Activated B cell treated with CpG ODN at 0.5 μM for 24 hours (primary cell): ENCODE measurements at regions of chr9 and their contacts with region 1.

Region 1: GRCh38 chr9:27400334-27400880 is 103.5 kb upstream of the EQTN start:
- DNase-seq: no peak
- ATAC-seq: no peak
- H3K4me3 Mint-ChIP-seq: no peak overlapping the region
- H3K27ac Mint-ChIP-seq: no peak overlapping the region
- H3K4me1 Mint-ChIP-seq: peaks cover 55% of the 10 kb centered on the region
- H3K27me3 Mint-ChIP-seq: no peaks in the 10 kb centered on the region
- CTCF ChIP-seq: no peak

Region 2: GRCh38 chr9:27385606-27386322 is 14.6 kb before region 1 on chr9:
- CTCF ChIA-PET with region 1: no interaction called
- POLR2A ChIA-PET with region 1: no interaction called
- intact Hi-C with region 1: loop called (anchors 1 kb)
- DNase-seq: no peak
- ATAC-seq: no peak
- H3K4me3 Mint-ChIP-seq: peak overlapping the region; percentile 19
- H3K27ac Mint-ChIP-seq: no peak overlapping the region
- H3K4me1 Mint-ChIP-seq: peaks cover 86% of the 10 kb centered on the region
- H3K27me3 Mint-ChIP-seq: no peaks in the 10 kb centered on the region
- CTCF ChIP-seq: no peak

Region 3: DNA sequence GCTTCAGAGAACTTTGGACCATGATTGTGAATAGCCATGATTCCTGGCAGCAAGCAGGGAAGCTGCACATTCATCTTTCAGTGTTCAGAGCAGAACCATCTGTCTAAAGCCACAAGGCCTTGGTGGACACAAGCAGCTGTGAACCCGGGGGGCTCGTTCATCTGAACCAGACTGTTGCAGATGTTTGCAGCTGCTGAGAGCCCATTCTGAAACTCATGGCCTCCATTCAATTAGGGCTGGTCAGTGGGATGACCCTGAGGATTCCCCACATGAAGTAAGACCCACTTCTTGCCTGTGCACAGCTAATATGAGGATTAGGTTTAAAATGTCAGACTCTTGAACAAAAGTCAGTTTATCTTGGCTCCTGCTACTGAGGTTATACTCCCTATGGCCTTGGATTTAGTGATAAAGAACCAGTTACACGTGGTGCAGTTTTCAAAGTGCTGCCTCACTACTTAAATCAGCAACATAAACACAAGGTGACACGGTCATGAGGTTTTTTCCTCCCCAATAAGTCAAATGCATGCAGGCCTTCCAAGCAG is 13.9 kb after region 1 on chr9:
- CTCF ChIA-PET with region 1: no interaction called
- POLR2A ChIA-PET with region 1: no interaction called
- intact Hi-C with region 1: loop called (anchors 2 kb)
- DNase-seq: no peak
- ATAC-seq: no peak
- H3K4me3 Mint-ChIP-seq: no peak overlapping the region
- H3K27ac Mint-ChIP-seq: no peak overlapping the region
- H3K4me1 Mint-ChIP-seq: peaks cover 32% of the 10 kb centered on the region
- H3K27me3 Mint-ChIP-seq: no peaks in the 10 kb centered on the region
- CTCF ChIP-seq: no peak